Calu3 (cell line): ENCODE measurements at regions of chr17 and their contacts with region 1.

Region 1: DNA sequence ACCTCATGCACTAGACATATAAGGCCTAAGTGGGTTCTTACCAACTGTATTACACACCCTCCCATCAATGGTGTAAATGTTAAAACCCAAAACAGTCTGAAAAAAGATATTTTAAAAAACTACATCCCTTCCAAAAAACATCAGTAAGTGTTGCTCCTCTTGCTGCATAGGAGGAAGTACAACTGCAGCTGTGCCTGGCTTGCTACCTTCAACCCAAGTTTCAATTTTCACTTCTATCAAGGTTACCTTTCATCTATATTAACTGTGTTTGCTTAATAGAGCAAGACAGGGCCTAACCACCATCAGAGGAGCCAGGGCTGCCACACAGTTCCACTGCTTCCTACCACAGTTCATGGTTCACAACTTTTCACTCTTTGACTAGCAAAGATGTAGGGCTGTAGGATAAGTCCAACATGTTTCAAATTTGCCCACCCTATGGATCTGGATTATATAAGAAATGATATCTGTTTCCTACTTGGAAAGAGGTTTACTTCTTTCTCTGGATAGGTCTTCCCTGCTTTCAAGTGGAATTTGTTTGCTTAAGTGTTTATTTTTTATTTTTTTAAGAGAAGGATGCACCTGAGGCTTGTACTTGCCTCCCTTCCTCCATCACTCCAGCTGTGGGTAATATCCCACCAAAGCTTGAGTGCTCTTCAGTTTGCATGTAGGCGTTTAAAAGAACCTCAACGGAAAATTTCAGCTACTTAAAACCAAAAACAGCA is 56.7 kb downstream of the GRB7 start:
- DNase-seq: peak; percentile 73
- H3K4me3 Mint-ChIP-seq: no peak overlapping the region
- H3K27ac Mint-ChIP-seq: no peak overlapping the region
- H3K4me1 Mint-ChIP-seq: no peaks in the 10 kb centered on the region
- H3K27me3 Mint-ChIP-seq: no peaks in the 10 kb centered on the region
- CTCF ChIP-seq: no peak

Region 2: GRCh38 chr17:39598047-39598481 is 196.3 kb before region 1 on chr17:
- CTCF ChIA-PET with region 1: no interaction called
- intact Hi-C with region 1: no loop called
- DNase-seq: peak; percentile 62
- H3K4me3 Mint-ChIP-seq: no peak overlapping the region
- H3K27ac Mint-ChIP-seq: no peak overlapping the region
- H3K4me1 Mint-ChIP-seq: peaks cover 7% of the 10 kb centered on the region
- H3K27me3 Mint-ChIP-seq: peaks cover 100% of the 10 kb centered on the region
- CTCF ChIP-seq: no peak

Region 3: GRCh38 chr17:39653662-39654331 is 140.6 kb before region 1 on chr17:
- CTCF ChIA-PET with region 1: interaction called, 22 read pairs
- intact Hi-C with region 1: no loop called
- DNase-seq: peak; percentile 100
- H3K4me3 Mint-ChIP-seq: no peak overlapping the region
- H3K27ac Mint-ChIP-seq: no peak overlapping the region
- H3K4me1 Mint-ChIP-seq: peaks cover 23% of the 10 kb centered on the region
- H3K27me3 Mint-ChIP-seq: no peaks in the 10 kb centered on the region
- CTCF ChIP-seq: no peak

Region 4: DNA sequence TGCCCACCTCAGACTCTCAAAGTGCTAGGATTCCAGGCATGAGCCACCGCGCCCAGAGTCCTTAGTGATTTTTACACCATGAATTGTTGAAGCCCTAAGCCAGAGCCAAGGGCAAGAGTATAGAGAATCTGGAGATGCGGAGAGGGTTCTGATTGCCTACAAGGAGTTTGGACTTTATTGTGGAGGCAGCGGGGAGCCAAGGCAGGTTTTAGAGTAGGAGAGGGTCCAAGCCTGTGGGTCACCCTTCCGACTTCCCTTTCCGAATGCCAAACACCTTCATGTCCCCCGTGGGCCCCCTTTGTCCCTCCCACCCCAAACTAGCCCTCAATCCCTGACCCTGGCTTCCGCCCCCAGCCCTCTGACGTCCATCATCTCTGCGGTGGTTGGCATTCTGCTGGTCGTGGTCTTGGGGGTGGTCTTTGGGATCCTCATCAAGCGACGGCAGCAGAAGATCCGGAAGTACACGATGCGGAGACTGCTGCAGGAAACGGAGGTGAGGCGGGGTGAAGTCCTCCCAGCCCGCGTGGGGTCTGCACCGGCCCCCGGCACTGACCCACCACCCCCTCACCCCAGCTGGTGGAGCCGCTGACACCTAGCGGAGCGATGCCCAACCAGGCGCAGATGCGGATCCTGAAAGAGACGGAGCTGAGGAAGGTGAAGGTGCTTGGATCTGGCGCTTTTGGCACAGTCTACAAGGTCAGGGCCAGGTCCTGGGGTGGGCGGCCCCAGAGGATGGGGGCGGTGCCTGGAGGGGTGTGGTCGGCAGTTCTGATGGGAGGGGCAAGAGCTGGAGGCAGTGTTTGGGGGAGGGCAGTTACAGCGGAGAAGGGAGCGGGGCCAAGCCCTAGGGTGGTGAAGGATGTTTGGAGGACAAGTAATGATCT is 71.2 kb before region 1 on chr17:
- CTCF ChIA-PET with region 1: interaction called, 21 read pairs
- intact Hi-C with region 1: no loop called
- DNase-seq: peak; percentile 75
- H3K4me3 Mint-ChIP-seq: peak overlapping the region; percentile 0
- H3K27ac Mint-ChIP-seq: peak overlapping the region; percentile 28
- H3K4me1 Mint-ChIP-seq: peaks cover 38% of the 10 kb centered on the region
- H3K27me3 Mint-ChIP-seq: no peaks in the 10 kb centered on the region
- CTCF ChIP-seq: no peak

Region 5: GRCh38 chr17:39822051-39822451 is 27.6 kb after region 1 on chr17:
- CTCF ChIA-PET with region 1: interaction called, 1,210 read pairs
- intact Hi-C with region 1: no loop called
- DNase-seq: peak; percentile 59
- H3K4me3 Mint-ChIP-seq: no peak overlapping the region
- H3K27ac Mint-ChIP-seq: no peak overlapping the region
- H3K4me1 Mint-ChIP-seq: peaks cover 9% of the 10 kb centered on the region
- H3K27me3 Mint-ChIP-seq: no peaks in the 10 kb centered on the region
- CTCF ChIP-seq: no peak

Region 6: DNA sequence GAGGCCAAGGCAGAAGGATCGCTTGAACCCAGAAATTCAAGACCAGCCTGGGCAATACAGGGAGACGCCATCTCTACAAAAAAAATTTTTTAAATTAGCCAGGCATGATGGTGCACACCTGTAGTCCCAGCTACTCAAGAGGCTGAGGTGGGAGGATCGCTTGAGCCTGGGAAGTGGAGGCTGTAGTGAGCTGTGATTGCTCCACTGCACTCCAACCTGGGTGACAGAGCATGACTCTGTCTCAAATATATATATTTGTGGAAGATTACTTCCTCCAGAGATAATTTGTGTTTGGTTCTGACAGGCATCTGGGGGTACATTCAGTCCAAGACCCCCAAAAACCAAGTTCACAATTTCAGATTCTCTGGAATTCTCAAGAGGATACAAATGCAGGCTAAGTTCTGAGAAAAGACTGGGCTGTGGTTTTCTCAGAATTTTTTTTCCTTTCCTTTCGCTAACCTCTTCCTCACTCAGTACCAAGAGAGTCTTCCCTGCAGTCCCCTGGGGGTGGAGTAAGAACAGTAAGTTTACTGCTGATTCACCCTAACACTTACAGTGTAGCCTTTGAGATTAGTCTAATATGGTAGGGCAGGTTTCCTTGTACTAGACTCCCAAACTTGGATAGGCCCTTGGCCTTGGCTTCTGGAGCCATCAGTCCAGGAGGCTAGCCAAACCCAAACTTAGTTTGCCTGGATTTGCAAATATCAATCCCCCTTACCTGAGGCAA is 108.9 kb after region 1 on chr17:
- CTCF ChIA-PET with region 1: interaction called, 40 read pairs
- intact Hi-C with region 1: no loop called
- DNase-seq: peak; percentile 66
- H3K4me3 Mint-ChIP-seq: no peak overlapping the region
- H3K27ac Mint-ChIP-seq: no peak overlapping the region
- H3K4me1 Mint-ChIP-seq: peaks cover 12% of the 10 kb centered on the region
- H3K27me3 Mint-ChIP-seq: no peaks in the 10 kb centered on the region
- CTCF ChIP-seq: no peak

Region 7: GRCh38 chr17:39952680-39953470 is 158.5 kb after region 1 on chr17:
- CTCF ChIA-PET with region 1: interaction called, 41 read pairs
- intact Hi-C with region 1: no loop called
- DNase-seq: peak; percentile 100
- H3K4me3 Mint-ChIP-seq: peak overlapping the region; percentile 58
- H3K27ac Mint-ChIP-seq: peak overlapping the region; percentile 18
- H3K4me1 Mint-ChIP-seq: peaks cover 42% of the 10 kb centered on the region
- H3K27me3 Mint-ChIP-seq: peaks cover 15% of the 10 kb centered on the region
- CTCF ChIP-seq: no peak

Region 8: GRCh38 chr17:40490289-40490853 is 696.0 kb after region 1 on chr17:
- CTCF ChIA-PET with region 1: no interaction called
- intact Hi-C with region 1: no loop called
- DNase-seq: no peak
- H3K4me3 Mint-ChIP-seq: no peak overlapping the region
- H3K27ac Mint-ChIP-seq: no peak overlapping the region
- H3K4me1 Mint-ChIP-seq: peaks cover 30% of the 10 kb centered on the region
- H3K27me3 Mint-ChIP-seq: peaks cover 71% of the 10 kb centered on the region
- CTCF ChIP-seq: no peak